Activated T-helper 2 cell treated with anti-CD3 and anti-CD28 coated beads, Interferon-gamma antibody, Interleukin-2, Interleukin-4, amounts not matched to agents 10 μg/mL and 5 μg/mL and 100 μg/mL, durations not matched to agents 14 hours and 24 hours and 36 hours (primary cell): ENCODE measurements at regions of chr9 and their contacts with region 1.

Region 1: DNA sequence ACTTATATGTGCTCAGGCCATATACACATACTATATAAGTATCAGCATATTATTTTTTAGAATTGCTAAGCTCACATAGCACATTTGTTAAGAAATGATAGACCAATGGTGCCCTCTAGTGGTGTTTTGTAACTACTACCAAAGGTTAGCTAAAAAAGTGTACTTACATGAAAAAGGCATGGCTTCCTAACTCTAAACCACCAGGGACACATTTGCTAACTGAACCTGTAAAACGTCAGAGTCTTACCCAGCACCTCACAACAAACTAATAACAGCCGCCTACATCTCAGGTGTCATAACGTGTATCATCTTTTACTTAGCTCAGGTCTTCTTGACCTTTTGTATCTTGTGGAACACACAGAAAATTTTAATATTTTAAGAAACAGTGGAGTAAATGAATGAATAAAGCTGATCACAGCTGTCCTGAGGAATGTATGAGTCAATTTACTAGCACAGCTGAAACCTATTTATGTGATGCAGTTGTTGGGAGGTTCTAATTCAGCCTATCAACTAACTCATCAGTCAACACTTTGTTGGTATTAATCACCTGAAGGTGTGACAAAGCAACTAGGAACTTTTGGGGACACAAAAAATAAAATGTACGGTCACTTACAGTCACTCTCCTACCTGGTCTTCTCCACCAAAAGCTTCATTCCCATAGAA is 72.9 kb downstream of the BAAT start:
- DNase-seq: no peak
- H3K4me3 Mint-ChIP-seq: no peak overlapping the region
- H3K27ac Mint-ChIP-seq: no peak overlapping the region
- H3K4me1 Mint-ChIP-seq: no peaks in the 10 kb centered on the region
- H3K27me3 Mint-ChIP-seq: no peaks in the 10 kb centered on the region

Region 2: DNA sequence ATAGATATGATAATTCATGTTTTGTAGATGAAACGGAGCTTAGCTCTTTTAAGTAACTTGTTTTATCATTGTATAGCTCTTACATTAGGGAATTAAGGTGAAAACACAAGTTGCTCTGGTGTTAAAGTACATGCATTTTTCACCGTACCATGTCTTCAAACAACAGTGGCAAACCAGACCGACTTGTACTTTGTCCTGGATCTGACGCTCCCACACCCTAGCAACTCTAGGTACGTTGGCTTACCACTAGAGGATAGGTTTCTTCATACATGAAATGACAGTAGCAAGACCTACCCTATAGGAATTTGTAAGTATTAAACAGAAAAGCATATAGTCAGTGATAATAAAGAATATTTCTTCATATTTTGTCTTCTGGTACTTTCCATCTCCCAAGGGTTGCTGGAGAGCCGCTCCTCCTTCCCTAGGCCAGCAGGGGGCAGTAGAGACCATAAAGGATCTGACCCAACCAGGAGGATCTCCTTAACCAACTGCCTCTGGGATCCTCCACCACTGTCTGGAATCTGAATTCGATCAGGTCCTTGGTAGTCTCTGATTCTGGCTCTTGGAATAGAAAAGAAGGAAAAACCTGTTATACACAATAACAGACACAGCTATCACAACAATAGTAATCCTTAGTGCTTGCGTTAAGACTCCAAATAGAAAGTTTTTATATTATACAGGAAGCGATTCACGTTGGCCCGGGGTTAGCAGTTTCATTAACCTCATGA is 597.4 kb before region 1 on chr9:
- intact Hi-C with region 1: loop called (anchors 2 kb)
- DNase-seq: peak; percentile 13
- H3K4me3 Mint-ChIP-seq: no peak overlapping the region
- H3K27ac Mint-ChIP-seq: no peak overlapping the region
- H3K4me1 Mint-ChIP-seq: no peaks in the 10 kb centered on the region
- H3K27me3 Mint-ChIP-seq: no peaks in the 10 kb centered on the region

Region 3: DNA sequence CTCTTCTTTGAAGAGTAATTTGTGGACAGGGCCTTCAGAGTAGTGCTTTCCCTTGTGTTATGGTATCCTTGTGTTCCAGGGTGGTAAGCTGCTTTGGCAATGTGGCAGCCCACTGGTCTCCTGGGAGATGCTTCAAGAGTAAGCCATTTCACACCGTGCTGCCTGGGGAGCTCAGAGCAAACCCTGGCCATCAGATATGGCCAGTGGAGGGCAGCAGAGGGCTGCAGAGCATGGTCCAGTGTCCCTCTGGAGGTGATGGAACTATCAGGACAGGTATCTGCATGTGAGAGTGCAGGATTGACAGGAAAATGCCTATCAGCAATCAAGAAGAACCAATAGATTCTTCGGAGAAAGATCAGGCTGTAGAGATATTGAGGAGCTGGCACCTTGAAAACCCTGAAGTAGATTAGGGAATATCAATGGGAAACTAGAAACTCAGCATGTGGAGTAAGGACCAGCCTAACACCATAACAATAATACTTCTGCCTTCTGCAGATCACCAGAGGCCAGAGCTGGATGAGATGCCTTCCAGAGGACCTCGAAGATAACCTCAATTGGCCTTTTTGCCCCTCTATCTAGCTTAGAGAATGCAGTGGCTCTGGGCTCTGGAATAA is 192.6 kb before region 1 on chr9:
- intact Hi-C with region 1: loop called (anchors 5 kb)
- DNase-seq: no peak
- H3K4me3 Mint-ChIP-seq: no peak overlapping the region
- H3K27ac Mint-ChIP-seq: no peak overlapping the region
- H3K4me1 Mint-ChIP-seq: no peaks in the 10 kb centered on the region
- H3K27me3 Mint-ChIP-seq: no peaks in the 10 kb centered on the region

Region 4: DNA sequence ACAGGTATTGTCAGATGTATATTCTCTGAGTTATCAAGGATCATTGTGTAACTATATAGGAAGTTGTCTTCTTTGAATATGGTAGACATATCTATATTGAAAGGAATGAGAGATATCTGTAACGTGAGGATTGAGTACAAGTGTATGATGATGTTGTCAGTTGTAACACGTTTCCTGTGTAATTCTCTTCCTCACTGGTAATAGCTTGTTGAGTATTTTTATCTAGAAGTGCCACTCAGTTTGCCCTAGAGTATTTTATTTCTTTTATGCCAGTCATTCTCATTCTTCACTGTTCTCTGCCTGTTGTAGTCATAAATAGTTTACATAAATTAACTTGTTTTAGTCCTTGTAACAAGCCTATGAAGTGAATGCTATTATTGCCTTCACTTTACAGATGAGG is 99.2 kb before region 1 on chr9:
- intact Hi-C with region 1: no loop called
- DNase-seq: no peak
- H3K4me3 Mint-ChIP-seq: no peak overlapping the region
- H3K27ac Mint-ChIP-seq: no peak overlapping the region
- H3K4me1 Mint-ChIP-seq: no peaks in the 10 kb centered on the region
- H3K27me3 Mint-ChIP-seq: no peaks in the 10 kb centered on the region

Region 5: GRCh38 chr9:101326501-101326900 is 14.6 kb after region 1 on chr9:
- intact Hi-C with region 1: no loop called
- DNase-seq: no peak
- H3K4me3 Mint-ChIP-seq: no peak overlapping the region
- H3K27ac Mint-ChIP-seq: no peak overlapping the region
- H3K4me1 Mint-ChIP-seq: no peaks in the 10 kb centered on the region
- H3K27me3 Mint-ChIP-seq: peaks cover 5% of the 10 kb centered on the region